ENCODE measurements at regions of chr16 and their contacts with region 1.

Region 1: DNA sequence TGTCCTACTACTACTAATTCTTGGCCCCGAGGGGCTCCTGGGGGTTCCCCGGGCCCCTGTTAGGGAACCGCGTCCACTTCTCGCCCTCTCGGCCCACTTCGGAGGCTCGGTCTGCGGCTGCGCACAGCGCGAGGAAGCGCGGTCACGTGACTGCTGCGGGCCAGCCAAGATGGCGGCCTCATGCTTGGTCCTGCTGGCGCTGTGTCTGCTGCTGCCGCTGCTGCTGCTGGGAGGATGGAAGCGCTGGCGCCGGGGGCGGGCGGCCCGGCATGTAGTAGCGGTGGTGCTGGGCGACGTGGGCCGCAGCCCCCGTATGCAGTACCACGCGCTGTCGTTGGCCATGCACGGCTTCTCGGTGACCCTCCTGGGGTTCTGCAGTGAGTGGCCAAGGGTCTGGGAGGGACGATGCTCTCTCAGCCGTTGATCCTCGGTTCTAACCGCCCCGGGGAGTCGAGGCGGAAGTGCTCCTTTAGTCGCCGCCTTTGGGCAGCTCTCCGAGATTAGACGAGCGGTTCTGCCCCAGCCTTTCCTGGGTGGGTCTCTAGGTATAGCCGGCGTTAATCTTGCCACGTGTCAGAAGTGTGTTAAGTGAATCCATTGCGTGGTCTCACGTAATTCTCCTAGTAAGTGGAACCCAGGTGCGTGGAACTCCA is at the start of gene ALG1:
- DNase-seq: peak; percentile 92
- ATAC-seq: peak; percentile 94
- H3K4me3 Mint-ChIP-seq: peak within 1 kb of the TSS; percentile 86
- H3K27ac Mint-ChIP-seq: peak within 1 kb of the TSS; percentile 92
- H3K4me1 Mint-ChIP-seq: peaks cover 26% of the 10 kb centered on the region
- H3K27me3 Mint-ChIP-seq: no peaks in the 10 kb centered on the region
- total RNA-seq, gene ALG1: 23.8 to 25.8 TPM

Region 2: GRCh38 chr16:5001571-5001970 is 70.2 kb before region 1 on chr16:
- CTCF ChIA-PET with region 1: no interaction called
- POLR2A ChIA-PET with region 1: no interaction called
- DNase-seq: no peak
- ATAC-seq: no peak
- H3K4me3 Mint-ChIP-seq: no peak overlapping the region
- H3K27ac Mint-ChIP-seq: no peak overlapping the region
- H3K4me1 Mint-ChIP-seq: no peaks in the 10 kb centered on the region
- H3K27me3 Mint-ChIP-seq: peaks cover 2% of the 10 kb centered on the region

Region 3: DNA sequence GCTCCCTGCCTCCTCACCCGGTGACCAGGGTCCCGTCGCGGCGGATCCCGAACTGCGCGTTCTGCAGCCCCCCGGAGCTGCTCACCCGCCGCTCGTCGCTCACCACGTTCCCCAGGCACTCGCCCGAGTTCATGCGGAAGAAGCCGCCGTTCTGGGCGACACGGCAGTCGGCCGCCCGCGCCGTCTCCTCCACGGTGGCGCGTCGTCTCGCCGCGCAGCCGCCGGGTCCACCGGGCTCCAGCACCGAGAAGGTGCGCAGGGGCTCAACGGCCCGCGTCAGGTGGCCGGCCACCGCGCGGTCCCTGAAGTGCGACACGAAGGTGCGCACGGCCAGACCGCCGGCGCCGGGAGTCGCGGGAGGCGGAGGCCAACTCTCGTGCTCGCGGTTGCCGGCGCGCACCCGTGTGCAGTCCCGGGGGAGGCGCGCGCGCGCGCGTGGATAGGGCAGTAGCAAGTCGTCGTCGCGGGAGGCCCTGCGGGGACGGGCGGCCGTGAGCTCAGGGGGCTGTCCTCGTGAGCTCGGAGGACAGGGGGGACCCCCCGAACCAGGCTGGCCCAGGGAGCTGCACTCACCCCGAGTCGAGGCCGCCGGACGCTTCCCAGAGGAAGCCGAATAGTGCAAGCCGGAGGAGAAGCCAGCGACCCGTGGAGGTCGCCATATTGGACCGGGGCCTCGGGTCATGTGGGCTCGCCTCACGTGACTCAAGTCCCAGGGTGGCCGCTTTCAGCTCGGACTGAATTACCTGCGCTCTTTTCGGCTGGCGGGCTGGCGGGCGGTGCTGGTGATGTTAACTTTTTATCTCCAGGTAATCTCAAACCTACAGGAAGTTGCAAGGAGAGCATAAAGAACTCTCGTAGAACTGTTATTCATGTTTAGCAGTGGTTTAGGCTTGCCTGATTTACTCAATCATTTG is 38.3 kb before region 1 on chr16 and contains the start of gene NAGPA:
- CTCF ChIA-PET with region 1: no interaction called
- POLR2A ChIA-PET with region 1: interaction called, 18 read pairs
- DNase-seq: peak; percentile 90
- ATAC-seq: peak; percentile 96
- H3K4me3 Mint-ChIP-seq: peak within 1 kb of the TSS; percentile 82
- H3K27ac Mint-ChIP-seq: peak within 1 kb of the TSS; percentile 86
- H3K4me1 Mint-ChIP-seq: peaks cover 23% of the 10 kb centered on the region
- H3K27me3 Mint-ChIP-seq: no peaks in the 10 kb centered on the region
- total RNA-seq, gene NAGPA: 15.6 TPM

Region 4: DNA sequence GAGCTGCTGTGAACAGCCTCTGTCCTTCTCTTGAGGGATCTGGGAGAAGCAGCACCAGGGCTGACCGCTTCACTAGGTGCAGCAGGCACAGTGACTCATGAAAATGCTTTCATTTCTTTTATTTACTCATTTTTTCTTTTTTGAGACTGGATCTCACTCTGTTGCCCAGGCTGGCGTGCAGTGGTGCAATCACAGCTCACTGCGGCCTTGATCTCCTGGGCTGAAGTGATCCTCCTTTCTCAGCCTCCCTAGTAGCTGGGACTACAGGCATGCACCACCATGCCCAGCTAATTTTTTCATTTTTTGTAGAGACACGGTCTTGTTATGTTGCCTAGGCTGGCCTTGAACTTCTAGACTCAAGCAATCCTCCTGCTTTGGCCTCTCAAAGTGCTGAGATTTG is 242.6 kb after region 1 on chr16:
- CTCF ChIA-PET with region 1: no interaction called
- POLR2A ChIA-PET with region 1: no interaction called
- DNase-seq: no peak
- ATAC-seq: no peak
- H3K4me3 Mint-ChIP-seq: no peak overlapping the region
- H3K27ac Mint-ChIP-seq: no peak overlapping the region
- H3K4me1 Mint-ChIP-seq: no peaks in the 10 kb centered on the region
- H3K27me3 Mint-ChIP-seq: no peaks in the 10 kb centered on the region